ENCODE measurements at regions of chr7 and their contacts with region 1.

Region 1: GRCh38 chr7:51224811-51225612 is 91.6 kb downstream of the COBL start:
- DNase-seq: peak; percentile 72 to 73
- H3K4me3 ChIP-seq: no peak overlapping the region
- H3K27ac ChIP-seq: no peak overlapping the region
- H3K4me1 ChIP-seq: peaks cover 18% of the 10 kb centered on the region
- H3K27me3 ChIP-seq: no peaks in the 10 kb centered on the region
- CTCF ChIP-seq: peak; percentile 85

Region 2: GRCh38 chr7:51255536-51256208 is 30.7 kb after region 1 on chr7:
- CTCF ChIA-PET with region 1: interaction called, 6 read pairs
- POLR2A ChIA-PET with region 1: interaction called, 10 read pairs
- intact Hi-C with region 1: loop called (anchors 5 kb)
- DNase-seq: peak; percentile 49 to 73
- H3K4me3 ChIP-seq: no peak overlapping the region
- H3K27ac ChIP-seq: no peak overlapping the region
- H3K4me1 ChIP-seq: peaks cover 23% of the 10 kb centered on the region
- H3K27me3 ChIP-seq: no peaks in the 10 kb centered on the region
- CTCF ChIP-seq: no peak

Region 3: DNA sequence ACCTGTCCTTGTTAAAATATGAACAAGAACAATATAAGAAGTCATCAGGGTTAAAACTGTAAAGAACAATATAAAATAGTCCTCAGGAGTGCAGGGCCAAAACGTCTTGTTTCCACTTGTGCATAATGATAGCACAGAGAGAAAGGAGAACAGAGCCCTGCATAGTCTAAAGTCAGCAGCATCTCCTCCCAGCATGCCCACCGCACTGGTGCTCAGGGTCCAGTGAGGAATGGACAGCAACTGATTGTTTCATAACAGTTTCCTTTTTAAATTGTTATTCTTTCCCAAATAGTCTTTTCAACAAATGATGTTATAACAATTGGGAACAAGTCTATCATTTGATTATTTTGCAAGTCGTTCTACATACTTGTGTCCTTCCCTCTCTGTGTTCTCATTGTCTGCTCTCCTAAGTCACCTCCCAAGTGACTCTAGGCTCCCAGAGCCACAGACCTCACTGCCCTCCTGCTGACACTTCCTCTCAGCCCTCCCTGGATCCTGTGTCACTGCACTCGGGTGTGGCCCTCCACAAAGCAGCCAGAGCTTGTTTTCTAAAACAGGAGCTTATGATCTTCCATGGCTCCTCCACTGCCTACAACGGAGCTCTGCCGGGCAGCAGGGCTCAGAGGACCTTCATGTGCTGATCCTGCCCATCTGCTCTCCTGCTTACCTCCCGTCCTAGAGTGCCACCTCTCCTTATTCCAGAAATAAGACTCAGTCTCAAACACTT is 64.0 kb after region 1 on chr7:
- CTCF ChIA-PET with region 1: no interaction called
- POLR2A ChIA-PET with region 1: interaction called, 10 read pairs
- intact Hi-C with region 1: no loop called
- DNase-seq: peak in 1 of 2 experiments; percentile 52
- H3K4me3 ChIP-seq: no peak overlapping the region
- H3K27ac ChIP-seq: no peak overlapping the region
- H3K4me1 ChIP-seq: peaks cover 21% of the 10 kb centered on the region
- H3K27me3 ChIP-seq: no peaks in the 10 kb centered on the region
- CTCF ChIP-seq: no peak

Region 4: GRCh38 chr7:51357821-51358220 is 132.8 kb after region 1 on chr7:
- CTCF ChIA-PET with region 1: interaction called, 3 read pairs
- POLR2A ChIA-PET with region 1: no interaction called
- intact Hi-C with region 1: loop called (anchors 2 kb)
- DNase-seq: no peak
- H3K4me3 ChIP-seq: no peak overlapping the region
- H3K27ac ChIP-seq: no peak overlapping the region
- H3K4me1 ChIP-seq: peaks cover 6% of the 10 kb centered on the region; the same call in 1 of the 2 replicates
- H3K27me3 ChIP-seq: no peaks in the 10 kb centered on the region
- CTCF ChIP-seq: peak; percentile 64; the same call in 1 of the 2 replicates

Region 5: GRCh38 chr7:51430480-51431086 is 205.6 kb after region 1 on chr7:
- CTCF ChIA-PET with region 1: no interaction called
- POLR2A ChIA-PET with region 1: no interaction called
- intact Hi-C with region 1: loop called (anchors 1 kb)
- DNase-seq: peak; percentile 50 to 60
- H3K4me3 ChIP-seq: no peak overlapping the region
- H3K27ac ChIP-seq: no peak overlapping the region
- H3K4me1 ChIP-seq: no peaks in the 10 kb centered on the region
- H3K27me3 ChIP-seq: peaks cover 60% of the 10 kb centered on the region
- CTCF ChIP-seq: peak; percentile 98

Measured in PC-9 (cell line).